Activated naive CD4-positive, alpha-beta T cell treated with anti-CD3 and anti-CD28 coated beads for 36 hours (primary cell): ENCODE measurements at regions of chr2 and their contacts with region 1.

Region 1: GRCh38 chr2:43787895-43788294 is 14.1 kb downstream of the DYNC2LI1 start:
- DNase-seq: no peak
- H3K4me3 Mint-ChIP-seq: peak overlapping the region; percentile 4
- H3K27ac Mint-ChIP-seq: peak overlapping the region; percentile 48
- H3K4me1 Mint-ChIP-seq: peaks cover 23% of the 10 kb centered on the region
- H3K27me3 Mint-ChIP-seq: no peaks in the 10 kb centered on the region

Region 2: DNA sequence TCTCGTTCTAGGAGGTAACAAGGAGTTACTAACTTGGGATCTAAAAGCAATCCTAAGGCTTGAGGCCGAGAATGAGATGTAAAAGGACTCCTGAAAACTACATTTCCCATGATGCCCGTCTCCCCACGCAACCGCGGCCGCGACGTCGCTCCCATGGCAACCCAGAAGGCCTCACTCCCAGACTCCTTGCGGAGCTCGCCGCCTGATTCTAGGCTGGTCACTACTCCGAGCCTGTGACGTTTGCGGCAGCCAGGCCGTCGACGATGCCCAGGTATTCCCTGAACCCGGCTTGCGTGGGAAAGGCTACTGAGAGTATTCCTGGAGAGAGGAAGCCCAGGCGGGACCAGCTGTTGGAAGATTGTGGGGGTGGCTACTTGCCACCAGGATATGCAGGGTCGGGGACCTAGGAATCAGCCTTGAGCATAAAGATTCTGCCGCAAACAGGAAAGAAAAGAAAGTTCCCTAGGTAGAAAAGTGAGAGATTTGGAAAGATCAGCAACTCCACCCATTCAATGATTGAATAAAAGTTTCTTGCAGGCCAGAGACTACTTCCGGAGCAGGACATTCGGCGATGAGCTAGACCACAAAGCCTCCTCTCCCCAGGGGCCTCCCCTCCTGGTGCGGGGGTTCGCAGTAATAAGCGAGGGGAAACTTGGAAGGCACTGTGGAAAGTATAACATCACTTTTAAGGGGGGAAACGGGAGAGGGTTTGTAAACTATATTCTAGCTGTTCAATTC is 13.8 kb before region 1 on chr2 and contains the start of gene DYNC2LI1:
- CTCF ChIA-PET with region 1: no interaction called
- intact Hi-C with region 1: loop called (anchors 1 kb)
- DNase-seq: peak; percentile 90
- H3K4me3 Mint-ChIP-seq: peak within 1 kb of the TSS; percentile 91
- H3K27ac Mint-ChIP-seq: peak within 1 kb of the TSS; percentile 79
- H3K4me1 Mint-ChIP-seq: peaks cover 21% of the 10 kb centered on the region
- H3K27me3 Mint-ChIP-seq: no peaks in the 10 kb centered on the region
- total RNA-seq, gene DYNC2LI1: 8.0 to 8.9 TPM